HCT116 (cell line): ENCODE measurements at regions of chr1 and their contacts with region 1.

Region 1: GRCh38 chr1:35298464-35298863 is 30.0 kb downstream of the ZMYM4 start:
- DNase-seq: no peak
- ATAC-seq: peak; percentile 61; the same call in 1 of the 2 replicates
- H3K4me3 ChIP-seq: no peak overlapping the region
- H3K27ac ChIP-seq: no peak overlapping the region
- H3K4me1 ChIP-seq: no peaks in the 10 kb centered on the region
- H3K27me3 ChIP-seq: no peaks in the 10 kb centered on the region
- CTCF ChIP-seq: peak; percentile 33 to 50 (median 40); a peak in 5 of 6 replicates
- POLR2A ChIP-seq: no peak
- RAD21 ChIP-seq: peak; percentile 73

Region 2: GRCh38 chr1:35202048-35202719 is 96.3 kb before region 1 on chr1:
- CTCF ChIA-PET with region 1: interaction called, 3 read pairs
- POLR2A ChIA-PET with region 1: no interaction called
- RAD21 ChIA-PET with region 1: no interaction called
- intact Hi-C with region 1: loop called (anchors 1 kb)
- DNase-seq: peak; percentile 79
- ATAC-seq: peak; percentile 100
- H3K4me3 ChIP-seq: no peak overlapping the region; a peak in 1 of 4 replicates
- H3K27ac ChIP-seq: no peak overlapping the region
- H3K4me1 ChIP-seq: peaks cover 0 to 9% of the 10 kb centered on the region in 2 experiments; a peak in 2 of 4 replicates
- H3K27me3 ChIP-seq: no peaks in the 10 kb centered on the region
- CTCF ChIP-seq: peak; percentile 85 to 89 (median 88)
- POLR2A ChIP-seq: no peak
- RAD21 ChIP-seq: peak; percentile 77

Region 3: DNA sequence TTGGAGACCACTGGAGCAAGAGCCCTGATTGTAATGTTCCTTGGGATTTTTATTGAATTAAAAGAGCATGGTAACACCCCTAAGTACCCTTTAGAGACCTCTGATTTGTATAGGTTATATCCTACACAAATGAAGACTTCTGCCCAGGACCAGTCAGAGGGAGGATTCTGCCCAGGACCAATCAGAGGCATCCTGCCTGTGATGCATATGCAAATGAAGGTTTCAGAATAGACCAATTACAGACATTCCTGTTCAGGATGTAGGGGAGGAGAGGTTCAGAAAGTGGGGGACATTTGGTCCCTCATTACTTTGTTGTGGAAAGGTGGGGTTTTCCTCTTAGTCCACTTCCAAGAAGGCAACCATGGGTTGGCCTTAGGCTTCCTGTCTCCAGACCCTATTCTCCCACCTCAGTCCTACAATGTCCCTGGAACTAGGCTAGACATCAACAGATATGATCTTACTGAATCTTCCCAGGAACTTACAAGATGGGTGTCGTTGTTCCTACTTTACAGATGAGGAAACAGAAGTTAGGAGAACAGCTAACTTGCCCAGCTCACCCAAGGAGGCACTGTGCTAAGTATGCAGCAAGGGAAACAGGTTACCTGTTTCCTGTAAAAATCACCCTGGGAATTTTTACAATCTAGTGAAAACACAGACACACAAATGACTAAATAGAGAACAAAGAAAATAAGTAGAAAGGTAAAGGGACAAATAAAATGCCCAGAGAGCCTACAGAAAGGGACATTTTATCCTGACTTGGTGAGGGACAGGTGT is 68.7 kb before region 1 on chr1:
- CTCF ChIA-PET with region 1: no interaction called
- POLR2A ChIA-PET with region 1: no interaction called
- RAD21 ChIA-PET with region 1: no interaction called
- intact Hi-C with region 1: no loop called
- DNase-seq: no peak
- ATAC-seq: no peak
- H3K4me3 ChIP-seq: no peak overlapping the region
- H3K27ac ChIP-seq: no peak overlapping the region
- H3K4me1 ChIP-seq: no peaks in the 10 kb centered on the region
- H3K27me3 ChIP-seq: no peaks in the 10 kb centered on the region
- CTCF ChIP-seq: no peak
- POLR2A ChIP-seq: no peak
- RAD21 ChIP-seq: no peak